Activated CD4-positive, alpha-beta T cell treated with anti-CD3 and anti-CD28 coated beads, Interleukin-2, amount 10 ng/mL, durations not matched to agents 7 days and 5 days (primary cell): ENCODE measurements at regions of chr1 and their contacts with region 1.

Region 1: GRCh38 chr1:212234431-212235395 is 50.5 kb upstream of the PPP2R5A start:
- DNase-seq: no peak
- H3K4me3 Mint-ChIP-seq: no peak overlapping the region
- H3K27ac Mint-ChIP-seq: no peak overlapping the region
- H3K4me1 Mint-ChIP-seq: peaks cover 26% of the 10 kb centered on the region
- H3K27me3 Mint-ChIP-seq: no peaks in the 10 kb centered on the region

Region 2: DNA sequence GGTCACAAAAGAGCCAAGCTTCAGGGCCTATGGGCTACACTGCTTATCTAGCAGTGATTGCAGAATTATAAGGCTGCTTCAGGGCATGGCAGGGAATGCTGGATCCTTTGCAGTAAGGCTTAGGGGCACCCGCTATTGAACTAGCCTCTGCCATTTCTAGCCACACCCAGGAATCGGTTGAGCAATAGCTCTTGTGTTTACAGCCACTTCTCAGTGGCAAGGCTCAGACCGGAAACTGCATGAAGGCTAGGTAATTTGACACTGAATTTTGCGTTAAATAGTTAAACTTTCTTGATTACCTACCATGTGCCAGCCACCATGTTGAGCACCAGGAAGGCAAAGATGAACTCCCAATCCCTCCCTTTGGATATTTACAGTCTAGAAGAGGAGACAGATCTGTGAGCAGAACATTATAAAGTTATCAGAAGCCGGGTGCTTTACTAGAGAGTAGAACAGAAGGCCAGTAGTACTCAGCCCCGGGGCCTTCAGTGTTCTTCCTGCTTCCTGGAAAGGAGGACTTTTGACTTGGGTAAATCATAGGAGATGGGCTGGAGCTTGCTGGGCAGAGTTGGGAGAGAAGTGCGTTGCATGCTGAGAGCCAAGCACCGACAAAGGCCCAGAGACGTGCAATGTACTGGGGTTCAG is 305.6 kb before region 1 on chr1:
- CTCF ChIA-PET with region 1: no interaction called
- POLR2A ChIA-PET with region 1: no interaction called
- DNase-seq: no peak
- H3K4me3 Mint-ChIP-seq: no peak overlapping the region
- H3K27ac Mint-ChIP-seq: no peak overlapping the region
- H3K4me1 Mint-ChIP-seq: peaks cover 6% of the 10 kb centered on the region
- H3K27me3 Mint-ChIP-seq: peaks cover 1% of the 10 kb centered on the region

Region 3: DNA sequence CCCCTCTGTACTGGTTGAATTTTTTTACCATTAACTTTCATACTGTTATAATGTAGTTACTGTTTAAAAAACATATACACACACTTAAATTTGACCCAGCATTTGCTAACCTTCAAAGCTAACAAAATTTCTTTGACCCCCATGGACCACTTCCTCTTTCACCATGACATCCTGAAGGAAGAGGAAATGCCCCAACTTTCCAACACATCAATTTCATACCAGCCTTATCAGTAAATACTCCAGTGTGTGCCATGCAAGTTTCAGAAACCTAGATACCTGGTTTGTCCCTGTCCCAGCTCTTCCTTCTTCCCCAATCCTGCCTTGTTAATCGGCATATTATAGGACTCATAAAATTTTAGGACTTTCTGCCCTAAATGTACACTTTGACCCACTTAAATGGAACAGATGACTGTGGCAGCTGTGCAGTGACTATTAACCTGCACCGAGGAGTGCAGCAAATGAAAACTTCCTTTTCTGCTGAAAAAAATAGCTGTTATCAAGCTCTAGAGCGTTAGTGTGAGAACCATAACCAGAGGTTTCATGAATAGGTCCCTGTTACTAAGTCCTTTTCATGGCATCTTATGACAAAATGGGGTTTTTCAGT is 145.1 kb before region 1 on chr1:
- CTCF ChIA-PET with region 1: no interaction called
- POLR2A ChIA-PET with region 1: no interaction called
- DNase-seq: no peak
- H3K4me3 Mint-ChIP-seq: no peak overlapping the region
- H3K27ac Mint-ChIP-seq: peak overlapping the region; percentile 43
- H3K4me1 Mint-ChIP-seq: peaks cover 23% of the 10 kb centered on the region
- H3K27me3 Mint-ChIP-seq: no peaks in the 10 kb centered on the region

Region 4: GRCh38 chr1:212247179-212247721 is 12.5 kb after region 1 on chr1:
- CTCF ChIA-PET with region 1: interaction called, 10 read pairs
- POLR2A ChIA-PET with region 1: no interaction called
- DNase-seq: no peak
- H3K4me3 Mint-ChIP-seq: no peak overlapping the region
- H3K27ac Mint-ChIP-seq: no peak overlapping the region
- H3K4me1 Mint-ChIP-seq: peaks cover 36% of the 10 kb centered on the region
- H3K27me3 Mint-ChIP-seq: peaks cover 2% of the 10 kb centered on the region

Region 5: DNA sequence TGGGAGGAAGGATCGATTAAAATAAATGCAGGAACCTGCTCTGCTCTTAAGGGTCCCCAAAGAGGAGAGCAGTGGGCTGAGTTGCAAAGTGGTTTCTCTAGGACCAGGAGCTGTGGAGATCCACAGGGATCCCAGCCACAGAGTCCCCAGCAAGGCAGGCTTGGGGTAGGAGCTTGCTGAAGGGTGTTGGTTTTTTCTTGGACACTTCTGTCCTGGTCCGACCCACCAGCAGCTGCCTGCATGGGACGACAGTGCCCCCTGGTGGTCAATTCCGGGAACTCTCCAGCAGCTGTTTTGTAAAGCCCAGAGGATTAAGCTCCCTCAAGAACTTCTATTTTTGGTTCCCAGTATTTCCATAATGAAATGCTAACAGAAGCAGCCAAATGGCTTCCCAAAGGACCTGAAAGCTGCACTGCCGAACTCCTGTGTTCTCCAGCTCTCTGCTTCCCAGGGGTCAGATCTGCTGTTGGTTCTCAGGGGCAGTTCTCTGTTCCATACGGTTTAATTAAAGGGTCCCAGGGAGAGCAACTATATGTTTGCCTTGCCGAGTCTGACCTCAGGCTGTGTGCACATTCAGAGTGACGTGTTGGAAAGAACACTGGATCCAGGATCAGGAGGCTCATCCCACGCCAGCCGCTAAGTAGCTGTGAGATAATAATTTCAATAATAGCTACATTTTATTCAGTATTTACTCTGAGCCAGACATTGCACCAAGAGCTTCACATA is 221.3 kb after region 1 on chr1:
- CTCF ChIA-PET with region 1: no interaction called
- POLR2A ChIA-PET with region 1: no interaction called
- DNase-seq: peak; percentile 84
- H3K4me3 Mint-ChIP-seq: no peak overlapping the region
- H3K27ac Mint-ChIP-seq: no peak overlapping the region
- H3K4me1 Mint-ChIP-seq: peaks cover 10% of the 10 kb centered on the region
- H3K27me3 Mint-ChIP-seq: no peaks in the 10 kb centered on the region